ENCODE measurements at regions of chr11 and their contacts with region 1.

Region 1: DNA sequence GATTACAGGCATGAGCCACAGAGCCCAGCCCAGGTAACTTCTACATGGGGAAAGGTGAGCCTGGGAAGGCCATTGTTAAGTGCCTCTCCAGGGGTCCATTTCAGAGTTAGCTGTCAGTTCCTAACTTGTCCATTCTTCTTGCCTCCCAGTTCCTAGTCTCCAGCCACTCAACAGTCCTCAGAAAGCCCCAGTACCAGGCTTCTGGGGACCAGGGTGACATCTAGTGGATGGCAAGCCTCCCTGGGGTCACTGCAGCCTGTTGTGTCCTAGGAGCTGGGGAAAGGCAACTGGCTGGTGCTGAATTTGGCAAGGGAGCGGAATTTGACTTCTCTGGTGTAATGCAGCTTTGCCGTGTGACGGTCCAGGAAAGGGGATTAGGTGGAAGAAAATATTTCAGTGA is 2.1 kb downstream of the LGALS12 start:
- DNase-seq: peak in 8 of 10 donors; percentile 65 to 96 (median 76)

Region 2: GRCh38 chr11:63427971-63428508 is 80.0 kb before region 1 on chr11:
- intact Hi-C with region 1: no loop called
- DNase-seq: no peak

Region 3: GRCh38 chr11:63478896-63479295 is 29.1 kb before region 1 on chr11:
- intact Hi-C with region 1: loop called (anchors 1 kb)
- DNase-seq: peak in 6 of 10 donors; percentile 8 to 84 (median 59)

Region 4: DNA sequence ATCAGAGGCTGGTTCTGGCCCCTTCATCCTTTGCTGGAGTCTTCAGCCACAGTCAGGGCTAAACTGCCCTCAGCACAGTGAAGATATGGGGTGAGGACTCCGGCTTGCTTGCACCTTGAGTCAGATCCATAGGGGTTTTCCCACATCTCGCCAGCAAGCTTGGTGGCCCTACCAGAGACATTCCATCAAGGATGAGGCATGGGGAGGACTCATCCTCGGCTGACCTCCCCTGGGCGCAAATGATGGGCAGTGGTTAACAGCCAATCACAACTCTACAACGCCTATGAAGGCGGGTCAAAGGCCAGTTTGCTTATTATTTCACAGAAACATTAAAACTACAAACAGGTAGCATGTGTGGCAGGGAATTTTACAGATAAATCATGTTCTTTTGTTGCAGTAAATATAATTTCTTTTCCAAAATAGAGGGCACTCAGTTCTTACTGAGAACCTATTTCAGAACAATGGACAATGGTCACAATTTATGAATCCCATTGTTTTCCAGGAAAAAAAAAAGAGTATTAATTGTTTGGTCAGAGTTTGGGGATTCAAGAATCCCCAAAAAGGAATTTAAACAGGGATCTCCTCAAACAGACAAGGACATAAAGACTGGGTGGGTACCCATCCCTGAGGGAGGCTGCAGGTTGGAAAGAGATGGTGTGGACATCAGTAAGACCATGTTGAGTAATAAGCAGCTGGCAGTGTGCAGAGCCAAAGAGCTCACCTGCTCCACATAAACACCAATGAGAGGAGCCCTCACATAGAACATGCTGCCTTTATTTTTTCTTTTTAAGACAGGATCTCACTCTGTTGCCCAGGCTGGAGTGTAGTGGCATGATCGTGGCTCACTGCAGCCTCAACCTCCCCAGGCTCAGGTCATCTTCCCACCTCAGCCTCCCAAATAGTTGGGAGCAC is 91.5 kb after region 1 on chr11:
- intact Hi-C with region 1: loop called (anchors 10 kb)
- DNase-seq: peak in 3 of 10 donors; percentile 54 to 86 (median 58)

Measured in posterior cingulate gyrus (tissue), 11 donors.